Ascending aorta (tissue), 2 donors: ENCODE measurements at regions of chr2 and their contacts with region 1.

Region 1: DNA sequence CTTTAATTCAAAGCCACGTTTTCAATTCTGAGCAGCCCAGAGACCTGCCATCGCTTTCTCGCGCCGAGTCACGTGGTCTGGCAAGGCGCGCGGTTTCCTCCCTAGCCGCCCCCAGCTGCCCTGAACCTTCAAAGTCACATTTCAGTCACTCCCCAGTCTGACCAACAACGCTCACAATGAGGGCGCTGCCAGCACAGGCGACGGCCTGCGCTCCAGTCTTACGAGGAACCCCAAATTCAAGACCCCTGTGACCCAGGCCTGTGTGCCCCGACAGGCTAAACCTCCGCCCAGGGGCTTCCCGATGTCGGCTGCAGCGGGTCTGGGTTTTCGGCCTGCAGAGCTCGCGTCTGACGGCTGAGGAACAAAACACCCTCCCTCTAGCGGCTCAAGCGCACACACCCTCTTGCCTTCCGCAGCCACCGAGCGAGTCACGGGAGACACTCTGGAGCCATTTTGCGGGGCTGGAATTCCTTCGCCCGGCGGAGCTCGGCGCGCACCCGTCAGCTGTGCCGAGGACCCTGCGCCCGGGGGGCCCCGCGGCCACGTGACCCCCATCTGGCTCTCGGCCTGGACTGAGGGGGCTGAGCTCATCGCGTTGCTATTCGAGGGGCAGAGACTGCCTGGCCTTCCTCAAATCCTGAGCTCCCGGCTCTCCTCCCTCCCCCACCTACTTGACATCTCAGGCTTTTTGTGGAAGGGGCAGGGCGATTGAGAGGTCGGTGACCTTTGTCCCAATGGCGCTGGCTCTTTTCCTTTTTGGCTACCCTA is 69.9 kb upstream of the ITGB6 start:
- DNase-seq: peak; percentile 60 to 96
- H3K4me3 ChIP-seq: peak overlapping the region; percentile 43 to 68
- H3K27ac ChIP-seq: peak overlapping the region; percentile 96 to 98
- H3K4me1 ChIP-seq: peaks cover 0 to 29% of the 10 kb centered on the region in 2 donors
- H3K27me3 ChIP-seq: no peaks in the 10 kb centered on the region
- CTCF ChIP-seq: peak; percentile 60 to 83 (median 67)

Region 2: DNA sequence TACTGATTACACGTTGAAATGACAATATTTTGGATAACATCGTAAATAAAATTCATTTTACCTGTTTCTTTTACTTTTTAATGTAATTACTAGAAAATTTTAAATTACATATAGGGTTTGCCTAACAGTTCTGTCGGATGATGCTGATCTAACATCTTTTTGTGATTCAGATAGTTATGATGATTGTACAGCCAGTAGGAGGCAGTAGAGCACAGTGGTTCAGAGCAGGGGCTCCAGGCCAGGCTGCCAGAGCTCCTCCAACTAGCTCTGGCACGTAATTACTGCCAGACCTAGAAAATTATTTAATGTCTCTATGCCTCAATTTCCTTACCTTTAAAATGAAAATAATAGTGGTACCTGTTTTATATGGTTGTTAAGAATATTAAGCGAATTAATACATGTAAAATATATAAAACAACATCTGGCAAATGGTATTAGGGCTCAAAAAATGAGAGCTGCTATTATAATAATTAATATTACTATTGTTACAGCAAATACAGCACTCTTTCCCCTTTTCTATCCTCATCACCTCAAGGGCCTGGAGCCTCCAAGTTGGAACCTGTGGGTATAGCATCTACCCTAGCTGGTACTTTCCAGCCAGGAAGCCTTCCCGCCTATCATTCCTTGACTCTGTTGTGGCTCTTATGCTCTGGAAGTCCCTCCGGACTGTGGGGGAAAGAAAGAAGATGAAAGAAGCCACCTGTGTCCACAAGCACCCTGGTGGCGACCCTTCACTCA is 159.9 kb before region 1 on chr2:
- intact Hi-C with region 1: loop called (anchors 5 kb)
- DNase-seq: peak in 1 of 2 donors; percentile 82
- H3K4me3 ChIP-seq: no peak overlapping the region
- H3K27ac ChIP-seq: no peak overlapping the region
- H3K4me1 ChIP-seq: no peaks in the 10 kb centered on the region
- H3K27me3 ChIP-seq: no peaks in the 10 kb centered on the region
- CTCF ChIP-seq: peak; percentile 76 to 86 (median 81)

Region 3: DNA sequence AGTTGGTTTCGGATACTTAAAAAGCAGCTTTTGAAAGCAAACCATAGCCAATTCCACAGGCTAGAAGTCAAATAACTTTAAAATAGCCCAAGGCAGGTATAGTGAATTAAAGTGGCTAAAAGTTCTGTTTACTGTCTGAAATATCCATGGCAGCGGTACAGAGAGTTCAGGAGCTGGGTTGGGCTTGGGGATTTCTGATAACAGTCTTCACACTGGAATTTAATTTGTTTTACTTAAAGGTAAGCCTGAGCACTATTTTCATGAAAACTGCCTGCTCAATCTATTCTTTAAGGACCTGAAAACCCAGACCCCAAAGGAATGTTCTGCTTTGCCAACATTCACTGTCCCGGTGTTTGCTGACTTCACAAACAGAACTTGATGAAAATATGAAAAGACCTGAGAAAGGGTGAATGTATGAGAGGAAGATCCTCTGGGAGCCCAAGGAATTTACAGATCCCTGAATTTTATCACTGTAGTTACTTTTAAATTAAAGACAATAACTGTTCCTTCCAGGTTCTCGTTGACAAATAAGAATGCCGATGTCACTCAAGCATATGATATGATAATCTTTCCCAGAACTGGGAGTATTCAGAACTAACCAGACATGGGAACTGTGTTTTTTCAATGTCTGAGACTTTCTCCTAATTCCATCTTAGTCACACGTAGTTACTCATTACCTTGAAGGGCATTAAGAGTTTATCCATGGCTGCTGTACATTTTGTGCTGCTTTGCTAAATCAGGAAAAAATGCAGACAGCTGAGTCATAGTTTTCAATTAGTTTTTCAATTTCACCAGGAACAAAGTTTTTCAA is 41.7 kb before region 1 on chr2:
- intact Hi-C with region 1: loop called (anchors 5 kb)
- DNase-seq: no peak
- H3K4me3 ChIP-seq: no peak overlapping the region
- H3K27ac ChIP-seq: peak overlapping the region; percentile 32 to 53
- H3K4me1 ChIP-seq: peaks cover 3 to 8% of the 10 kb centered on the region in 2 donors
- H3K27me3 ChIP-seq: no peaks in the 10 kb centered on the region
- CTCF ChIP-seq: no peak

Region 4: DNA sequence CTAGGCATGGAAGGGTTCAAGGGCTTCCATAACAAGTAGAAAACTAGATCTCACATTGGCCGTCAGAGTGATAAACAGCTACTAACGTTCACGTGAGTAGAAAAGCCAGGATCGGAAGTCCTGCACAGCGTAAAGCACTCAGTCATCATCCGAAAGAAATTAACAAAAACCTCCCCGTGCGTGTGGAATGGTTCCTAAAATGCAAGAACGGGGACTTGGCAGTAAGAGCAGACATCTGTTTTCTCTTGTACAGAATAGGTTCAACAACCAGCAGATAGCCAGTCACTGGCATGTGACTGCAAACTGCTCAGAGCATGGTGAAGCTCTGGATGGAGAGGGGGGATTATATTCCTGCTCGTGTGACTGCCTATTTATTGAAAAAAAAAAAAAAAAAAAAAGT is 37.0 kb after region 1 on chr2:
- intact Hi-C with region 1: loop called (anchors 5 kb)
- DNase-seq: no peak
- H3K4me3 ChIP-seq: peak overlapping the region in 1 of 2 donors; percentile 39
- H3K27ac ChIP-seq: peak overlapping the region; percentile 23 to 51
- H3K4me1 ChIP-seq: peaks cover 3 to 9% of the 10 kb centered on the region in 2 donors
- H3K27me3 ChIP-seq: no peaks in the 10 kb centered on the region
- CTCF ChIP-seq: no peak

Region 5: DNA sequence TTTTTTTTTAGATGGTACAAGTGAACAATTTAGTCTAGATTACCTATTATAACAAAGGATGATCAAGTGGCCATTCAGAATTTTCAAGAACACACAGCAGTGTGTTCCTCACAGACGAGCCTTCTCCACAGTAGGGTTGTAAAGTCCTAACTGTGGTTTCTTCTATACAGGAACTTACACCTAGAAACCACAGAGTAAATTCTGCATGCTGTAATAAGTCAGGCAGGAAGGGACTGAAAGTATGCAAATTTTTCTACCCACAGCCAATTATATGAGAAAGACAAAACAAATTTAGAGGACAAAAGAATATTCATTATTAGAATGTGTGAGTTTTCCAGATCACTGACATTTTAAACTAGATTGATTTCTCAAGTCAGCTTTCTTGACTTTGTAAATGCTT is 124.2 kb after region 1 on chr2:
- intact Hi-C with region 1: no loop called
- DNase-seq: no peak
- H3K4me3 ChIP-seq: no peak overlapping the region
- H3K27ac ChIP-seq: no peak overlapping the region
- H3K4me1 ChIP-seq: peaks cover 1 to 34% of the 10 kb centered on the region in 2 donors
- H3K27me3 ChIP-seq: no peaks in the 10 kb centered on the region
- CTCF ChIP-seq: no peak

Region 6: DNA sequence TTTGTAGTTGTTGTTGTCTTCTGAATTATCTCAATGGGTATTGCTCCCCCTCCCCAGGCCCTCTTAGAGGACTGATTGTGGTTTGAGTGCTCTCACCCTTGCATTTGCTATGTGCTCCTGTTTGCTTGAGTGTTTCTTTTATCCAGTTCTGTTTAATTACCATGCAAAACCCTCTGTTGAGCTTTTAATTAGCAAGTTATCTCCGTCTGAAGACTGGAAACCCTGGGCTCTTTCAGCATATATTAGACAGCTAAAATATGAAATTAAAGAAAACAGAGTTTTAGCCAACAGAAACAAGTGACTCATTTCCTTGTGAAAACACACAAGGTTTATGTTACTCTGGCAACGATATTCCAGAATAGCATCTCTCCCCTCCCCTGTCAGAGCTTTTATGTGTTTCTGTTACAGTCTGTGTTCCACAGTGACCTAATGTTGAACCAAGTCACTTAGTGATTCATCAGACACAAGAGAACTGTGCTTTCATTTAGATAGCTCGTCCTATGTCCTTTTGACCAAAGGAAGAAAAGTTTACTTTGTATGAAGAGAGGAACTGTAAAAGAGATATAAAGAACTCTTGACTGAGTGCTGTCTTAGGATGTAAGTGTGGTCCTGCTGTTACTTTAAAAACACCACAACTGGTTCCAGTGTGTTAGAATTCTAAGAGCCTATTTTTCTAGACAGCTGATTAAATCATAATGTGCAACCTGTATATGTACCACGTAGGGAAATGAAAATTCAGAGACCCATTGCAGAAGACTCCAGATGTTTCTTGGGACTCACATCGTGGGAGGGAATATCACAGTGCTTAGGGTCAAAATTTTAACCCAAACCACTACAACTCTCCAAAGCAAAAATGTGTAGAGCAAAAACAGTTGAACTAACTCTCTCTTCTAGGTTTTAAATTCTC is 396.4 kb after region 1 on chr2:
- intact Hi-C with region 1: loop called (anchors 5 kb)
- DNase-seq: no peak
- H3K4me3 ChIP-seq: peak overlapping the region in 1 of 2 donors; percentile 31
- H3K27ac ChIP-seq: peak overlapping the region; percentile 58 to 78
- H3K4me1 ChIP-seq: peaks cover 0 to 18% of the 10 kb centered on the region in 2 donors
- H3K27me3 ChIP-seq: no peaks in the 10 kb centered on the region
- CTCF ChIP-seq: no peak